ENCODE measurements at regions of chr6 and their contacts with region 1.

Region 1: GRCh38 chr6:110944681-110945151 is 13.8 kb upstream of the GTF3C6 start:
- DNase-seq: no peak
- H3K4me3 ChIP-seq: no peak overlapping the region
- H3K27ac ChIP-seq: no peak overlapping the region
- H3K4me1 ChIP-seq: peaks cover 0 to 4% (median 1%) of the 10 kb centered on the region in 4 donors
- H3K27me3 ChIP-seq: no peaks in the 10 kb centered on the region
- CTCF ChIP-seq: no peak

Region 2: DNA sequence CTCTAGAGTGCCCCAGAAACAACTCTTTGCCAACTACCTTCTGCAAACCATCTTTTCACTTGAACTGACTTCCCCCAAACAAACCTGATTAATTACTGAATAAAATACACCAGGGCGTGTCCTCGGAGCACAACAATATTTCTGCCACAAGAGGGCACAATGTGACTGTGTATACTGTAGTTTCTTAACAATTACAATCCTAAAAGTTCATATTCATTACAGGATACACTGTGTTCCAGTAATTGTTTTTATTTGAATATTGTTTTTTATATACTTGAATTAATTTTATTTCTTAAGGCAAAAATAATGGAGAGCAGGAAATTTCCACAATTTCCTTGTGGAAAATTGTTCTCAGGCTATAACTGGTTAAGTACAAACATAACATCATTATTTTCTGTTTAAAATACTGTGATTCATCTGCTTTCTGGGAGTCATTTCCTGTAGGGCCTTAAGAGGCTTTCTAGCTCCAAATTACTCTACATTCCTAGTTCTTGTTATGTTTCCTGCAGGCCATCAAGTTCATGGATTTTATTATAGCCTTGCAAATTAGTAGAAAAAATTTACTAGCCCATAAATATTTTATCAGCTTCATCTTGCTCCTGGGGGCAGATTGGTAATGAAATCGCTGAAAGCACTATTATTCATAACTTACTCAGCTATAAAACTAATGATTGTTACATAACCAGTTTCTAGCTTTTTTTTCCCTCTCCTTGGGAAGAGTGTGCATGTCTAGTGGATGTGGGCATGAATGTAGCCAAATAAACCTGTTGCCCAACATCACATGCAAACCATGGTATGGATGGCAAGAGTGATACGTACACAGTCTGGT is 416.4 kb before region 1 on chr6:
- intact Hi-C with region 1: loop called (anchors 10 kb)
- DNase-seq: peak in 1 of 2 donors; percentile 56
- H3K4me3 ChIP-seq: no peak overlapping the region
- H3K27ac ChIP-seq: no peak overlapping the region
- H3K4me1 ChIP-seq: peaks cover 0 to 7% (median 3%) of the 10 kb centered on the region in 4 donors
- H3K27me3 ChIP-seq: no peaks in the 10 kb centered on the region
- CTCF ChIP-seq: peak; percentile 66 to 68